Activated CD4-positive, alpha-beta T cell treated with anti-CD3 and anti-CD28 coated beads, Interleukin-2, amount 10 ng/mL, durations not matched to agents 24 days and 14 days (primary cell): ENCODE measurements at regions of chr1 and their contacts with region 1.

Region 1: DNA sequence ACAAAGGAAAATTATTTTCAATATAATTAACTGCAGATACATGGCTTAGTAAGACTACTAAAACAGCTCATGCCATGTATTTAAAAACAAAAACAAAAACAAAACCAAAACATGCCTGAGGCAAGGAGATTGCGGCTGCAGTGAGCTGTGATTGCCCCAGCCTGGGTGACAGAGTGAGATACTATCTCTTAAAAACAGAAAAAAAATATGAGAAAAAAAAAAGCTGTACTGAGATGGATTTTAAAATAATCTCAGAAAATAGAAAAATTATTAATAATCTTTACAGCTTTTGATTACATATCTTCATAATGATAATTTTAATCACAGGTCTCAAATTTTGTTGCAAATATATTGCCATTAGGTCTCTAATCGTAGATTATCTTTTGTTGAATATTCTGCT is 24.0 kb upstream of the LIN9 start:
- DNase-seq: peak; percentile 71
- H3K4me3 Mint-ChIP-seq: peak overlapping the region; percentile 48
- H3K27ac Mint-ChIP-seq: no peak overlapping the region
- H3K4me1 Mint-ChIP-seq: peaks cover 8% of the 10 kb centered on the region
- H3K27me3 Mint-ChIP-seq: no peaks in the 10 kb centered on the region

Region 2: GRCh38 chr1:226201029-226201593 is 131.8 kb before region 1 on chr1:
- intact Hi-C with region 1: loop called (anchors 2 kb)
- DNase-seq: peak; percentile 59
- H3K4me3 Mint-ChIP-seq: no peak overlapping the region
- H3K27ac Mint-ChIP-seq: no peak overlapping the region
- H3K4me1 Mint-ChIP-seq: peaks cover 2% of the 10 kb centered on the region
- H3K27me3 Mint-ChIP-seq: peaks cover 14% of the 10 kb centered on the region

Region 3: GRCh38 chr1:226457307-226457712 is 124.4 kb after region 1 on chr1:
- intact Hi-C with region 1: no loop called
- DNase-seq: peak; percentile 80
- H3K4me3 Mint-ChIP-seq: peak overlapping the region; percentile 65
- H3K27ac Mint-ChIP-seq: peak overlapping the region; percentile 19
- H3K4me1 Mint-ChIP-seq: peaks cover 12% of the 10 kb centered on the region
- H3K27me3 Mint-ChIP-seq: peaks cover 8% of the 10 kb centered on the region